Activated CD4-positive, alpha-beta T cell treated with anti-CD3 and anti-CD28 coated beads for 36 hours (primary cell): ENCODE measurements at regions of chr7 and their contacts with region 1.

Region 1: DNA sequence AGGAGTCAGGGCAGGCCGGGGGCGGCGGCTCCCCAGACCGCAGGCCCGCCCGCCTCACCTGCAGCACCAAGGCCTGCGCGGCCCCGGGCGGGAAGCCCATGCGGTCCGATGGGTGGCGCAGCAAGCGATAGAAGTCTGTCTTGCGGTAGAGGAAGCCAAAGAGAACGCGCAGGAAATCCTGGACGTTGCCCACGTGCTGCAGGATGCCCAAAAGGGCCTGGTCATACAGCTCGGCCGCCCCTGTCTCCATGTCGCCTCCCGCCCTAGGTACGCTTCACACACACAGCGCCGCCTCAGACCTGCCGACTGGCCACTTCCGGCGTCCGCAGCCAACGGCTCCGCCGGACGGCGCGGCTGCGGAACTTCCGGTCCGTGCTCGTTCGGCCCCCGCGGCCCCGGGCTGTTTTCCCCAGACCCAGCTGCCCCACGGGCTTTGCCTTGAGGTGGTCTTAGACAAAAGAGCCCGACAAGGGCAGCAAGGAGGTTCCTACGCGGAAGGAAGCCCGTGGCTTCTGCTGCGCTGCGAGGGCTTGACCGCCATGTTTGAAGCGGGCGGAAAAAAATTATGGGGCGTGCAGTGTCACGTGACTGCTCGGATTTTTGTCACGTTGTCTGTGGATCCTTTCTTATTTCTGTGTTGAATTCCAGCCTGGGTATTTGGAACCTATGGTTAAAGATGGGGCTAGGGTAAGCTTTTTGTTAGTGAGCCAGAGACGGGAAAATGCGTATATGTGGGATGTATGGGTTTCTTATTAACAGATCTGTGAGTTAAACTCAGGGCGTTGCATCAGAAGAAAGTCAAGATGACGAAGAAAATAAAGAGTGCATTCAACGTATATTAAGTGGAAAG is at the start of gene NUDCD3:
- DNase-seq: peak; percentile 88
- ATAC-seq: peak; percentile 74
- H3K4me3 Mint-ChIP-seq: peak within 1 kb of the TSS; percentile 86
- H3K27ac Mint-ChIP-seq: peak within 1 kb of the TSS; percentile 100
- H3K4me1 Mint-ChIP-seq: peaks cover 42% of the 10 kb centered on the region
- H3K27me3 Mint-ChIP-seq: peaks cover 3% of the 10 kb centered on the region
- total RNA-seq, gene NUDCD3: 70.3 to 77.6 TPM

Region 2: GRCh38 chr7:44044315-44045225 is 446.0 kb before region 1 on chr7 and contains the start of gene DBNL:
- CTCF ChIA-PET with region 1: no interaction called
- POLR2A ChIA-PET with region 1: interaction called, 3 read pairs
- intact Hi-C with region 1: loop called in 1 of 2 experiments (anchors 10 kb)
- DNase-seq: peak; percentile 95
- ATAC-seq: peak; percentile 72
- H3K4me3 Mint-ChIP-seq: peak within 1 kb of the TSS; percentile 88
- H3K27ac Mint-ChIP-seq: peak within 1 kb of the TSS; percentile 93
- H3K4me1 Mint-ChIP-seq: peaks cover 52% of the 10 kb centered on the region
- H3K27me3 Mint-ChIP-seq: no peaks in the 10 kb centered on the region
- total RNA-seq, gene DBNL: 106 to 117 TPM

Region 3: DNA sequence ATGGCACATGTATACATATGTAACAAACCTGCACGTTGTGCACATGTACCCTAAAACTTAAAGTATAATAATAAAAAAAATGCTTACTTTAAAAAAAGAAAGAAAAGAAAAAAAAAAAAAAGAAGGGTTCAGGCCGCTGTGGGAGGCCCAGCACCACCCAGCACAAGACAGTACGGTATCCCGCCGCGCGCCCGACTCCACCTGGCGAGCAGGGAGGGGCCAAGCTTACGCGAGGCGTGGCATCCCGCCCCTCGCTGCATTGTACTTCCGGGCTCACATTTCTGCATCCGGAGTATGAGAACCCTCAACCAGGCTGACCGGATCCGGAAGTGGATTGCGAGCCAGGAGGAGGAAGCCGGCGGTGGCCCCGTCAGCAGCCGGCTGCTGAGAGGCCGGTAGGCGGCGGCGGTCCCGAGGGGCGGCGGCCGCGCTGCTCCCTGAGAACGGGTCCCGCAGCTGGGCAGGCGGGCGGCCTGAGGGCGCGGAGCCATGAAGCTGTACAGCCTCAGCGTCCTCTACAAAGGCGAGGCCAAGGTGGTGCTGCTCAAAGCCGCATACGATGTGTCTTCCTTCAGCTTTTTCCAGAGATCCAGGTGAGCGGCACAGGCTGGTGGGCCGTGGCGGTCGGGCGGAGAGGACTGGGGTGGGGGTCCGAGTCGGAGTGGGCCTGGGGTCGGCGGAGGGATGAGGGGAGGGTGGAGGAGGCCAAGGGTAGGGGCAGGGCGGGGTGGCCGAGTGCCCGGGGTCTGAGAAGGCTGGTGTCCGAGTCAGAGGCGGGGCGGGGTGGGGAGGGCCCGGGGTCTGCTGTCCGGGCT is 289.7 kb before region 1 on chr7 and contains the start of gene YKT6:
- CTCF ChIA-PET with region 1: no interaction called
- POLR2A ChIA-PET with region 1: no interaction called
- intact Hi-C with region 1: loop called in 1 of 2 experiments (anchors 1 kb)
- DNase-seq: peak; percentile 97
- ATAC-seq: peak; percentile 99
- H3K4me3 Mint-ChIP-seq: peak within 1 kb of the TSS; percentile 80
- H3K27ac Mint-ChIP-seq: peak within 1 kb of the TSS; percentile 75
- H3K4me1 Mint-ChIP-seq: peaks cover 26% of the 10 kb centered on the region
- H3K27me3 Mint-ChIP-seq: peaks cover 6% of the 10 kb centered on the region
- total RNA-seq, gene YKT6: 51.0 to 51.3 TPM

Region 4: GRCh38 chr7:44477063-44477830 is 13.3 kb before region 1 on chr7:
- CTCF ChIA-PET with region 1: interaction called, 11 read pairs
- POLR2A ChIA-PET with region 1: no interaction called
- intact Hi-C with region 1: no loop called
- DNase-seq: peak; percentile 76
- ATAC-seq: peak; percentile 95
- H3K4me3 Mint-ChIP-seq: no peak overlapping the region
- H3K27ac Mint-ChIP-seq: no peak overlapping the region
- H3K4me1 Mint-ChIP-seq: peaks cover 32% of the 10 kb centered on the region
- H3K27me3 Mint-ChIP-seq: no peaks in the 10 kb centered on the region

Region 5: GRCh38 chr7:44581879-44582603 is 91.5 kb after region 1 on chr7 and contains the start of gene TMED4:
- CTCF ChIA-PET with region 1: interaction called, 3 read pairs
- POLR2A ChIA-PET with region 1: no interaction called
- intact Hi-C with region 1: loop called in 1 of 2 experiments (anchors 1 kb)
- DNase-seq: peak; percentile 100
- ATAC-seq: peak; percentile 95
- H3K4me3 Mint-ChIP-seq: peak within 1 kb of the TSS; percentile 85
- H3K27ac Mint-ChIP-seq: peak within 1 kb of the TSS; percentile 92
- H3K4me1 Mint-ChIP-seq: peaks cover 33% of the 10 kb centered on the region
- H3K27me3 Mint-ChIP-seq: no peaks in the 10 kb centered on the region
- total RNA-seq, gene TMED4: 71.6 to 73.0 TPM

Region 6: GRCh38 chr7:44622307-44623151 is 132.0 kb after region 1 on chr7:
- CTCF ChIA-PET with region 1: no interaction called
- POLR2A ChIA-PET with region 1: no interaction called
- intact Hi-C with region 1: no loop called
- DNase-seq: peak; percentile 72
- ATAC-seq: peak; percentile 90
- H3K4me3 Mint-ChIP-seq: peak overlapping the region; percentile 50
- H3K27ac Mint-ChIP-seq: peak overlapping the region; percentile 94
- H3K4me1 Mint-ChIP-seq: peaks cover 90% of the 10 kb centered on the region
- H3K27me3 Mint-ChIP-seq: no peaks in the 10 kb centered on the region

Region 7: GRCh38 chr7:44638611-44639557 is 148.3 kb after region 1 on chr7:
- CTCF ChIA-PET with region 1: no interaction called
- POLR2A ChIA-PET with region 1: no interaction called
- intact Hi-C with region 1: no loop called
- DNase-seq: peak; percentile 90
- ATAC-seq: peak; percentile 71
- H3K4me3 Mint-ChIP-seq: peak overlapping the region; percentile 73
- H3K27ac Mint-ChIP-seq: peak overlapping the region; percentile 100
- H3K4me1 Mint-ChIP-seq: peaks cover 75% of the 10 kb centered on the region
- H3K27me3 Mint-ChIP-seq: no peaks in the 10 kb centered on the region

Region 8: GRCh38 chr7:44748045-44748947 is 257.7 kb after region 1 on chr7 and contains the start of gene ZMIZ2:
- CTCF ChIA-PET with region 1: no interaction called
- POLR2A ChIA-PET with region 1: no interaction called
- intact Hi-C with region 1: loop called in 1 of 2 experiments (anchors 1 kb)
- DNase-seq: peak; percentile 97
- ATAC-seq: peak; percentile 87
- H3K4me3 Mint-ChIP-seq: peak within 1 kb of the TSS; percentile 78
- H3K27ac Mint-ChIP-seq: peak within 1 kb of the TSS; percentile 97
- H3K4me1 Mint-ChIP-seq: peaks cover 31% of the 10 kb centered on the region
- H3K27me3 Mint-ChIP-seq: no peaks in the 10 kb centered on the region
- total RNA-seq, gene ZMIZ2: 82.8 to 106 TPM

Region 9: DNA sequence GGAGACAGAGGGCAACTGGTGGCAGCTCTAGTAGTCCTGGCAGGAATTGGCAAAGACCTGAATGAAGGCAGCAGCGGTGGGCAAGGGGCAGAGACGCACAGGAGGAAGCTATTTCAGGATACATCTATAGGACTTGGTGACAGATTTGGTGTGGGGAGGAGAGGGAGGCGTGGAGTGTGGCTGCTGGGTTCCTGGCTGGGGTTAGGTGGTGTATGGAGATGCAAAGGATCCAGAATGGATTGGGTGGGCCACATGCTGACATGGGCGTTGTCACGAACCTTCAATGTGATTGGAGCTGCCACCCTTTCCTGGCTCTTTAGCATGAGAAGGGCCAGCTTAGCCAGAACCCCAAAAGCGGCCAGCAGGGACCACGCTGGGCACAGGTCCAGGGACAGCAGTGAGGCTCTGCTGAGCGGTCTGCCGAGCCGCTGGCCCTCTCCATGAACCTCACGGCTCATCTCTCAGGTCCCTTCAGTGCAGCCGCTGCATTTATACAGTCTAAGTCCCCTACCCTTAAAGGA is 1073.4 kb after region 1 on chr7:
- CTCF ChIA-PET with region 1: no interaction called
- POLR2A ChIA-PET with region 1: no interaction called
- intact Hi-C with region 1: no loop called
- DNase-seq: no peak
- ATAC-seq: no peak
- H3K4me3 Mint-ChIP-seq: no peak overlapping the region
- H3K27ac Mint-ChIP-seq: no peak overlapping the region
- H3K4me1 Mint-ChIP-seq: no peaks in the 10 kb centered on the region
- H3K27me3 Mint-ChIP-seq: peaks cover 12% of the 10 kb centered on the region